Activated naive CD4-positive, alpha-beta T cell treated with anti-CD3 and anti-CD28 coated beads for 36 hours (primary cell): ENCODE measurements at regions of chr14 and their contacts with region 1.

Region 1: GRCh38 chr14:75560962-75561432 is 17.4 kb upstream of the FLVCR2 start:
- DNase-seq: peak; percentile 72
- H3K4me3 Mint-ChIP-seq: no peak overlapping the region
- H3K27ac Mint-ChIP-seq: peak overlapping the region; percentile 53
- H3K4me1 Mint-ChIP-seq: peaks cover 67% of the 10 kb centered on the region
- H3K27me3 Mint-ChIP-seq: no peaks in the 10 kb centered on the region

Region 2: GRCh38 chr14:75147423-75148071 is 413.4 kb before region 1 on chr14:
- CTCF ChIA-PET with region 1: no interaction called
- intact Hi-C with region 1: no loop called
- DNase-seq: peak; percentile 25
- H3K4me3 Mint-ChIP-seq: no peak overlapping the region
- H3K27ac Mint-ChIP-seq: no peak overlapping the region
- H3K4me1 Mint-ChIP-seq: peaks cover 60% of the 10 kb centered on the region
- H3K27me3 Mint-ChIP-seq: no peaks in the 10 kb centered on the region

Region 3: GRCh38 chr14:75374911-75375310 is 186.1 kb before region 1 on chr14:
- CTCF ChIA-PET with region 1: no interaction called
- intact Hi-C with region 1: no loop called
- DNase-seq: no peak
- H3K4me3 Mint-ChIP-seq: no peak overlapping the region
- H3K27ac Mint-ChIP-seq: no peak overlapping the region
- H3K4me1 Mint-ChIP-seq: no peaks in the 10 kb centered on the region
- H3K27me3 Mint-ChIP-seq: no peaks in the 10 kb centered on the region

Region 4: GRCh38 chr14:75487155-75487671 is 73.8 kb before region 1 on chr14:
- CTCF ChIA-PET with region 1: interaction called, 30 read pairs
- intact Hi-C with region 1: loop called (anchors 1 kb)
- DNase-seq: peak; percentile 35
- H3K4me3 Mint-ChIP-seq: no peak overlapping the region
- H3K27ac Mint-ChIP-seq: no peak overlapping the region
- H3K4me1 Mint-ChIP-seq: peaks cover 22% of the 10 kb centered on the region
- H3K27me3 Mint-ChIP-seq: peaks cover 3% of the 10 kb centered on the region

Region 5: DNA sequence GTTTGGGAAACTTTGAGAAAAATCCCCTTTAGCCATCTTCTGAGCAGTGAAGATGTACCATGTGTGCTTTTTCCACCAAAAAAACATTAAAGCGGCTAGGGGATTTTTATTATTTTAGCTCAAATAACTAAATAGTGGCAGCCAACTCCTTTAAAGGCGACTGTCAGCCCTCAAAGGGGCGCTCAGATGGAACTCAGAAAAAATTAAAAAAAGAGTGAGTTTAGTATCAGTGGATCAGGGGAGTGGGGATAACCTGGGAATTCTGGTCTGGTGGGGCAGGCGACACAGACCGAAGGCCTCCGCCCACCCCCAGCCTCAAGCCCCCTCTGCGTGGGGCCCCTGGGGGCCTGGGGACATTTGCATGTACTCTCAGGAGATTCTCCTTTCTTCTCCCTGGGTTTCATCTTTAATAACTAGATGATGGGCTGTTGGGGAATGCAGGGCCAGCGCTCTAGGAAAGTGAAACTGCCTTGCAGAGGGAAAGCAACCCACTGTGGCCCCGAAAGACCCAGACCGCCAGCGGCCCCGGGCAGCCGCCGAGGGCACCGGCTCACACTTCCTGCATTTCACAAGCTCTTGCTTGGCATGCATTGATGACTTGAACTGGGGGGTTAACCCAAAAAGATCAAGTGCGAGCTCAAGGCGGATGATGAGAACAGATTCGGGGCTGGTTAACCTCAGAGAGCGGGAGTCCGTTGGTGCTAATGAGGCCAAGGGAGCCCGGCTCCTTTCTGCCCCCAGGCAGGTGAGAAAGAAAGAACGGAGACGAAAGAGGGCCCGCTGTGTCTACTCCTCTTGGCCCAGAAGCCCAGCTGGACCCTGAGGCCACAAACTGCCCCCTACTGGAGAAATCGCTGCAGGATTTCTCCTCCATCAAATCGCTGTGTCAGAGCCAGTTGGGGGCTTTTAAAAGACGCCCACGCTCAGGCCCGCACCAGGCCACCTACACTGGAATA is 46.0 kb before region 1 on chr14:
- CTCF ChIA-PET with region 1: interaction called, 88 read pairs
- intact Hi-C with region 1: loop called (anchors 1 kb)
- DNase-seq: peak; percentile 73
- H3K4me3 Mint-ChIP-seq: peak overlapping the region; percentile 70
- H3K27ac Mint-ChIP-seq: peak overlapping the region; percentile 89
- H3K4me1 Mint-ChIP-seq: peaks cover 58% of the 10 kb centered on the region
- H3K27me3 Mint-ChIP-seq: no peaks in the 10 kb centered on the region

Region 6: GRCh38 chr14:75531660-75532317 is 29.2 kb before region 1 on chr14:
- CTCF ChIA-PET with region 1: interaction called, 38 read pairs
- intact Hi-C with region 1: no loop called
- DNase-seq: no peak
- H3K4me3 Mint-ChIP-seq: peak overlapping the region; percentile 30
- H3K27ac Mint-ChIP-seq: peak overlapping the region; percentile 75
- H3K4me1 Mint-ChIP-seq: peaks cover 83% of the 10 kb centered on the region
- H3K27me3 Mint-ChIP-seq: no peaks in the 10 kb centered on the region

Region 7: DNA sequence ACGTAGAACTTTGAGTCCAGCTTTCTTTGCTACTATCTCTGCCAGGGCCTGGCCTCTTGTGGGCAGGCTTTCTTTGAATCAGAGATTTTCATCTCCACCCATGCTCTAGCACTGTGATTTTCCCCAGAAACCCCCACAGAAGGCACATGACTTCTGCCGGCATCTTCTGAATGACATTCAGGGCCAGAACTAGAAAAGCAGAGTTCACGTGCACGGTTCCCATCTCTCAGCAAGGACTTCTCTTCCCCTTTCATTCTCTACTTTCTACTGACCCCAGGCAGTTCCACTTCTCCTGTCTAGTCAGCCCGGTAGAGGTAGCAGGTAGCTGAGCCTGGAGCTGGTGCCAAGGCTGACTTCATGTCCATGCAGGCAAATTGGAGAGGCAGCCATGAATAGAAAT is 11.8 kb before region 1 on chr14:
- CTCF ChIA-PET with region 1: interaction called, 79 read pairs
- intact Hi-C with region 1: no loop called
- DNase-seq: peak; percentile 58
- H3K4me3 Mint-ChIP-seq: no peak overlapping the region
- H3K27ac Mint-ChIP-seq: peak overlapping the region; percentile 77
- H3K4me1 Mint-ChIP-seq: peaks cover 52% of the 10 kb centered on the region
- H3K27me3 Mint-ChIP-seq: no peaks in the 10 kb centered on the region

Region 8: GRCh38 chr14:76034566-76034965 is 473.6 kb after region 1 on chr14:
- CTCF ChIA-PET with region 1: no interaction called
- intact Hi-C with region 1: no loop called
- DNase-seq: no peak
- H3K4me3 Mint-ChIP-seq: no peak overlapping the region
- H3K27ac Mint-ChIP-seq: no peak overlapping the region
- H3K4me1 Mint-ChIP-seq: no peaks in the 10 kb centered on the region
- H3K27me3 Mint-ChIP-seq: no peaks in the 10 kb centered on the region